Right ventricle myocardium superior (tissue), 1 donor: ENCODE measurements at regions of chr19 and their contacts with region 1.

Region 1: GRCh38 chr19:33176670-33177416 is 17.3 kb upstream of the LRP3 start:
- DNase-seq: peak; percentile 98
- ATAC-seq: peak; percentile 95

Region 2: DNA sequence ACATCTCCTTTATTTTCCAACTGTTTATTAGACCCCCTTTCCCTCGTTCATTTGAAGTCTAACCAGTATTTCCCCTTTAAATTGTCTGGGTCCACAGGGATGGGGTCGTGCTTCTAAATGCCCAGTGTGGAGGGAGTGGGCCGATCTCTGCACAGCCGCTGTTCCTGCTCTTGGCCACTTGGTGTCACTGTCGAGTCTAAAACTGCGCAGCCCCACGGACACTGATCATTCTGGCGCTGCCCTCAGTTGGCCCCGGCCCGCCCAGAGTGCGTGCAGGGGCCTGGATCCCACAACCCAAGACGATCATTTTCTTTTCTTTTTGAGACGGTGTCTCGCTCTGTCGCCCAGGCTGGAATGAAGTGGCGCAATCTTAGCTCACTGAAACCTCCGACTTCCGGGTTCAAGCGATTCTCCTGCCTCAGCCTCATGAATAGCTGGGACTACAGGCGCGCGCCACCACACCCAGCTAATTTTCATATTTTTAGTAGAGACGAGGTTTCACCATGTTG is 32.9 kb before region 1 on chr19:
- intact Hi-C with region 1: loop called (anchors 5 kb)
- DNase-seq: peak; percentile 75
- ATAC-seq: peak; percentile 98